CD8-positive, alpha-beta T cell (primary cell): ENCODE measurements at regions of chr3 and their contacts with region 1.

Region 1: DNA sequence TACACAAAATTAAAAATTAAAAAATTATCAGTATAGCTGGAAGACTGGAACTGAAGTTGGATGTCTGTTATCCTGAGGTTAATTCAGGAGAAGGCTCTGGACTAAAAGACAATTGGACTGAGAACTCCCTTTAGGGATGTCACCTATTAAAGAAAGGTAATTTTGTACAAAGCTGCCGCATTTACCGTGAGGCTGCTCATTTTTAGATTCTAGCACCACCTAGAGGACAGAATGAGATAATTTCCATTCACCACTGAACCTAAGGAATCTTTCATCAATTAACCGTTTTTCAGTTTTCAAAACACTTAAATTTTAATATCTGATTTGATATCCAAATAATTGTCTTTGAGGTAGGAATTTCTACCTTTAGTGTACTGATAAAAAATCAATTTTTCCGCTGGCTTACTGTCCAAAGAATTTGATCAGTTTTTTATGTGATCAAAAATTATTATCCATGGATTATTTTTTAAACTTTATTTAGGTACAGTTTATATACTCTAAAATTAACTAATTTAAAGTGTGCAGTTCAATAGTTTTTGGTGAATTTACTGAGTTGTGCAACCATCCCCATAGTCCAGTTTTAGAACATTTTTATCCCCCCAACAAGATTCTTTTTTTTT is 106.7 kb upstream of the TNIK start:
- DNase-seq: peak in 2 of 9 experiments; percentile 66 to 74
- ATAC-seq: peak; percentile 57
- H3K4me3 ChIP-seq: no peak overlapping the region
- H3K4me3 Mint-ChIP-seq: no peak overlapping the region
- H3K27ac ChIP-seq: no peak overlapping the region
- H3K27ac Mint-ChIP-seq: no peak overlapping the region
- H3K4me1 ChIP-seq: no peaks in the 10 kb centered on the region
- H3K4me1 Mint-ChIP-seq: peaks cover 3% of the 10 kb centered on the region
- H3K27me3 ChIP-seq: no peaks in the 10 kb centered on the region
- H3K27me3 Mint-ChIP-seq: peaks cover 2% of the 10 kb centered on the region
- CTCF ChIP-seq: peak; percentile 94

Region 2: GRCh38 chr3:170961616-170962400 is 605.1 kb before region 1 on chr3:
- CTCF ChIA-PET with region 1: interaction called, 5 read pairs
- POLR2A ChIA-PET with region 1: no interaction called
- intact Hi-C with region 1: loop called (anchors 1 kb)
- DNase-seq: peak in 2 of 9 experiments; percentile 18 to 40
- ATAC-seq: no peak
- H3K4me3 ChIP-seq: no peak overlapping the region
- H3K4me3 Mint-ChIP-seq: no peak overlapping the region
- H3K27ac ChIP-seq: no peak overlapping the region
- H3K27ac Mint-ChIP-seq: no peak overlapping the region
- H3K4me1 ChIP-seq: no peaks in the 10 kb centered on the region
- H3K4me1 Mint-ChIP-seq: no peaks in the 10 kb centered on the region
- H3K27me3 ChIP-seq: peaks cover 0 to 2% of the 10 kb centered on the region in 2 experiments
- H3K27me3 Mint-ChIP-seq: no peaks in the 10 kb centered on the region
- CTCF ChIP-seq: peak; percentile 72

Region 3: DNA sequence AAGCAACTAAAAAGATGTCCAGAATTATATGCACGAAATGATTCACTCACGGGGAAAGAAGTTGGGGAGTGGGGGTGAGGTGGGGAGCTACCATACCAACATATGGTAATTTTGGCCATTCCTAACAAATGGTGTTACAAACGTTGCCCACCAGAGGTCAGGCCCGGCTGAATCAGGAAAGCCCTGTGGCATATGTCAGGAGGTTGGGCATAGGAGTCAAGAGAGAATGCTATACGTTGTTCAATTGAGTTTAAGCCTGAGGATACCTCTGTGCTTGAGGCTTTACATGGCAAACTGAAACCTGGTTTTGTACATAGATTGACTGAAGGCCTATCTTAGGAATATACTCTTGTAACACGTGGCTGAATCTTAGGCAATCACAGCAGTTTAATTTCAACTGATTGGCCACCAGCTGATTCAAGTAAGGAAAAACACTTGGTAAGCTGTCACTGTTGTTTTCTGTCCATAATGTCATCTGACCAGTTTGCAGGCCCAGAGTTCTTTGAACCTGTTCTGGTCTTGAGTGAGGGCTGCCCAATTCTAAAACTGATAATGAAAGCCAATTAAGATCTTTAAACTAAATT is 517.0 kb before region 1 on chr3:
- CTCF ChIA-PET with region 1: interaction called, 4 read pairs
- POLR2A ChIA-PET with region 1: no interaction called
- intact Hi-C with region 1: loop called (anchors 1 to 5 kb)
- DNase-seq: peak in 8 of 9 experiments; percentile 4 to 50 (median 26)
- ATAC-seq: peak; percentile 55
- H3K4me3 ChIP-seq: no peak overlapping the region
- H3K4me3 Mint-ChIP-seq: no peak overlapping the region
- H3K27ac ChIP-seq: no peak overlapping the region
- H3K27ac Mint-ChIP-seq: no peak overlapping the region
- H3K4me1 ChIP-seq: no peaks in the 10 kb centered on the region
- H3K4me1 Mint-ChIP-seq: no peaks in the 10 kb centered on the region
- H3K27me3 ChIP-seq: no peaks in the 10 kb centered on the region
- H3K27me3 Mint-ChIP-seq: peaks cover 11% of the 10 kb centered on the region
- CTCF ChIP-seq: peak; percentile 28

Region 4: GRCh38 chr3:171162986-171163723 is 403.8 kb before region 1 on chr3:
- CTCF ChIA-PET with region 1: interaction called, 28 read pairs
- POLR2A ChIA-PET with region 1: interaction called, 3 read pairs
- intact Hi-C with region 1: loop called (anchors 1 kb)
- DNase-seq: peak in 3 of 9 experiments; percentile 9 to 58 (median 42)
- ATAC-seq: peak; percentile 34
- H3K4me3 ChIP-seq: no peak overlapping the region
- H3K4me3 Mint-ChIP-seq: no peak overlapping the region
- H3K27ac ChIP-seq: no peak overlapping the region
- H3K27ac Mint-ChIP-seq: no peak overlapping the region
- H3K4me1 ChIP-seq: no peaks in the 10 kb centered on the region
- H3K4me1 Mint-ChIP-seq: peaks cover 18% of the 10 kb centered on the region
- H3K27me3 ChIP-seq: no peaks in the 10 kb centered on the region
- H3K27me3 Mint-ChIP-seq: no peaks in the 10 kb centered on the region
- CTCF ChIP-seq: peak; percentile 77

Region 5: GRCh38 chr3:171187706-171188290 is 379.1 kb before region 1 on chr3:
- CTCF ChIA-PET with region 1: interaction called, 32 read pairs
- POLR2A ChIA-PET with region 1: no interaction called
- intact Hi-C with region 1: loop called (anchors 1 kb)
- DNase-seq: peak in 3 of 9 experiments; percentile 10 to 55 (median 40)
- ATAC-seq: peak; percentile 63
- H3K4me3 ChIP-seq: no peak overlapping the region
- H3K4me3 Mint-ChIP-seq: no peak overlapping the region
- H3K27ac ChIP-seq: no peak overlapping the region
- H3K27ac Mint-ChIP-seq: no peak overlapping the region
- H3K4me1 ChIP-seq: no peaks in the 10 kb centered on the region
- H3K4me1 Mint-ChIP-seq: peaks cover 13% of the 10 kb centered on the region
- H3K27me3 ChIP-seq: no peaks in the 10 kb centered on the region
- H3K27me3 Mint-ChIP-seq: no peaks in the 10 kb centered on the region
- CTCF ChIP-seq: peak; percentile 75

Region 6: DNA sequence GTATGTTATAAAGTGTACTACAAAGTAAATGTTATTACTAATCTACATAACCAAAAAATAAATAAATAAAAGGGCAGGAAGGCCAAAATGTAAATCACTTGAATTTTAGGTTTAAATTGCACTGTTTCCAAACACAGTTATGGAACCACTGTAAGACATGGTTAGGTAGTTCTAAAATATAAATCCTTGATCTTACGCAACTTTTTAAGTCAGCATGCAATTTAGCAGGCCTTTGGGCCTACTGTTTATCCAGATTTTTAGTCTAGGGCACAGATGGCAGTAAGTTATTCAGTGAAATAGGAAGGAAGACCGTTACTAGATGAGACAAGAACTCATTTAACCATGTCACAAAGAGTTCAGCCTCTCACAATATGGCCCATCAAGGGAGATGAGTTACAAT is 353.0 kb before region 1 on chr3:
- CTCF ChIA-PET with region 1: no interaction called
- POLR2A ChIA-PET with region 1: no interaction called
- intact Hi-C with region 1: no loop called
- DNase-seq: no peak
- ATAC-seq: no peak
- H3K4me3 ChIP-seq: no peak overlapping the region
- H3K4me3 Mint-ChIP-seq: no peak overlapping the region
- H3K27ac ChIP-seq: no peak overlapping the region
- H3K27ac Mint-ChIP-seq: no peak overlapping the region
- H3K4me1 ChIP-seq: no peaks in the 10 kb centered on the region
- H3K4me1 Mint-ChIP-seq: peaks cover 39% of the 10 kb centered on the region
- H3K27me3 ChIP-seq: no peaks in the 10 kb centered on the region
- H3K27me3 Mint-ChIP-seq: no peaks in the 10 kb centered on the region
- CTCF ChIP-seq: no peak

Region 7: GRCh38 chr3:171328419-171329082 is 238.4 kb before region 1 on chr3:
- CTCF ChIA-PET with region 1: interaction called, 15 read pairs
- POLR2A ChIA-PET with region 1: no interaction called
- intact Hi-C with region 1: loop called (anchors 1 to 5 kb)
- DNase-seq: peak; percentile 22 to 81 (median 54)
- ATAC-seq: peak; percentile 97
- H3K4me3 ChIP-seq: no peak overlapping the region
- H3K4me3 Mint-ChIP-seq: no peak overlapping the region
- H3K27ac ChIP-seq: no peak overlapping the region
- H3K27ac Mint-ChIP-seq: peak overlapping the region; percentile 1
- H3K4me1 ChIP-seq: peaks cover 31% of the 10 kb centered on the region
- H3K4me1 Mint-ChIP-seq: peaks cover 65% of the 10 kb centered on the region
- H3K27me3 ChIP-seq: no peaks in the 10 kb centered on the region
- H3K27me3 Mint-ChIP-seq: no peaks in the 10 kb centered on the region
- CTCF ChIP-seq: peak; percentile 38

Region 8: DNA sequence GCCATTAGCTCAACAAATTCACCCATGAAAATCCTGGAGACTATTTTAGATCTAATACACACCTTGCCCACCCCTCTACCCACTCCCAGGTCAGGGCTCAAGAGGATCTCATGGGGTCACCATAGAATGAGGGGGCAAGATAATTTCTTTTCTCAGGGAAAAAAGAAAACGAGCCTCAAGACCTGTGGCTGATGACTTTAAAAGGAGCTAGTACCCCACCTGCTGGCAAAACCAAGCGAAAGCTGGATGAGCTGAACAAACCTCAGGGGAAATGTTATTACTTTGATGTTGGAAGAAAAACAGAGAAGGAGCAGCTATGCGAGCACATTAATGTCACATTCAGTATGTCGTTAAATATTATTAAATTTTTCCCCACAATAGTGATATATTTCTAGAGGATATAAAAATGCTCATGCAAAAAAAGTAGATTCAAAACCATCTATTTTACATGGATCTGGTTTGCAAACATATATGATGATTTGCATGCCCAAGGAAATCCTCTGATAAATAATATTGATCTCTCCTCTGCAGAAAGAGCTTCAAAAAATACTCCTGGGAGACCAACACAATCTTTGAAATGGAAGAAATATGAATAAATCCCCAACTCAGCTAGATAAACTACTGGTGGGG is 205.6 kb after region 1 on chr3:
- CTCF ChIA-PET with region 1: no interaction called
- POLR2A ChIA-PET with region 1: no interaction called
- intact Hi-C with region 1: loop called in 1 of 2 experiments (anchors 2 kb)
- DNase-seq: peak in 8 of 9 experiments; percentile 13 to 61 (median 40)
- ATAC-seq: peak; percentile 36
- H3K4me3 ChIP-seq: no peak overlapping the region
- H3K4me3 Mint-ChIP-seq: no peak overlapping the region
- H3K27ac ChIP-seq: no peak overlapping the region
- H3K27ac Mint-ChIP-seq: no peak overlapping the region
- H3K4me1 ChIP-seq: no peaks in the 10 kb centered on the region
- H3K4me1 Mint-ChIP-seq: no peaks in the 10 kb centered on the region
- H3K27me3 ChIP-seq: no peaks in the 10 kb centered on the region
- H3K27me3 Mint-ChIP-seq: peaks cover 5% of the 10 kb centered on the region
- CTCF ChIP-seq: peak; percentile 58

Region 9: DNA sequence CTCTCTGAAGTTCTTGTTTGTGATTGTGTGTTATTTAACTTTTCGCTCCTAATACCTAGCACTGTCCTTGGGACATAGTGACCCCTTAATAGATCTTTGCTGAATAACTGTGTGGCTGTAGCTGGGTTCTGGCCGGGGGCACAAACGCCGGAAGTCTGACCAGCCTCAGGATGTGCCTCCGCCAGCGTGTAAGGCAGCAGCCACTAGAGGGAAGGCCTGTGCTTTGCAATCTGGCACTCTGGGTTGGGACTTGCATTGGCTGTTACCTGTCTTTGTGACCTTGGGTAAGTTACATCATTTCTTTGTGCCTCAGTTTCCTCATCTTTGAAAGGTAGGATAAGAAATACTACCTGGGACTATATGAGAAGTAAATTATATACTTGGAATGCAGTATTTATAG is 722.7 kb after region 1 on chr3:
- CTCF ChIA-PET with region 1: no interaction called
- POLR2A ChIA-PET with region 1: no interaction called
- intact Hi-C with region 1: no loop called
- DNase-seq: peak in 2 of 9 experiments; percentile 7 to 13
- ATAC-seq: no peak
- H3K4me3 ChIP-seq: no peak overlapping the region
- H3K4me3 Mint-ChIP-seq: no peak overlapping the region
- H3K27ac ChIP-seq: no peak overlapping the region
- H3K27ac Mint-ChIP-seq: no peak overlapping the region
- H3K4me1 ChIP-seq: no peaks in the 10 kb centered on the region
- H3K4me1 Mint-ChIP-seq: peaks cover 17% of the 10 kb centered on the region
- H3K27me3 ChIP-seq: no peaks in the 10 kb centered on the region
- H3K27me3 Mint-ChIP-seq: no peaks in the 10 kb centered on the region
- CTCF ChIP-seq: no peak